ENCODE measurements at regions of chr22 and their contacts with region 1.

Region 1: GRCh38 chr22:32528984-32529982 is 54.7 kb downstream of the FBXO7 start:
- DNase-seq: peak; percentile 92

Region 2: DNA sequence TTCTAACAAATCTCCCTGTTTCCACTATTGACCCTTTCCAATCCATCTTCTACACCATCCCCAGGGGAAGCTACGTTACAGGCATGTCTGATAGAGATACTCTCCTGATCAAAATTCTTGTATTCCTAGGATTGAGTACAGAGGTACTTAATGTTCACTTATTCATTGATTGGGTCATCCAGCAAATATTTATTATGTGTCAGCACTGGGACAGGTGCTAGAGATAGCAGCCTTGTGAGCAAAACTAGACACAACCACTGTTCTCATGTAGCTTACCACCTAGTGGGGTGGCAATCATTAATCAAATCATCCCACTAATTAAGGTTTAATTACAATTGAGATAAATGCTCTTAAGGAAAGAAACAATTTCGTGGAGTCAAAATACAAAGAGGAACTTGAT is 107.8 kb before region 1 on chr22:
- CTCF ChIA-PET with region 1: no interaction called
- POLR2A ChIA-PET with region 1: no interaction called
- DNase-seq: no peak

Region 3: GRCh38 chr22:32518848-32519247 is 10.4 kb before region 1 on chr22:
- CTCF ChIA-PET with region 1: interaction called, 14 read pairs
- POLR2A ChIA-PET with region 1: no interaction called
- DNase-seq: no peak

Region 4: GRCh38 chr22:32558681-32559355 is 29.5 kb after region 1 on chr22:
- CTCF ChIA-PET with region 1: no interaction called
- POLR2A ChIA-PET with region 1: no interaction called
- DNase-seq: no peak

Measured in HEK293T (cell line).